H1 (cell line): ENCODE measurements at regions of chr1 and their contacts with region 1.

Region 1: GRCh38 chr1:160768295-160768657 is 27.7 kb upstream of the LY9 start:
- DNase-seq: peak in 1 of 2 experiments; percentile 60
- H3K4me3 ChIP-seq: no peak overlapping the region
- H3K27ac ChIP-seq: no peak overlapping the region
- H3K4me1 ChIP-seq: no peaks in the 10 kb centered on the region
- H3K27me3 ChIP-seq: no peaks in the 10 kb centered on the region
- CTCF ChIP-seq: peak; percentile 82 to 89 (median 85)
- EP300 ChIP-seq: no peak
- POLR2A ChIP-seq: no peak
- RAD21 ChIP-seq: peak; percentile 78 to 81

Region 2: DNA sequence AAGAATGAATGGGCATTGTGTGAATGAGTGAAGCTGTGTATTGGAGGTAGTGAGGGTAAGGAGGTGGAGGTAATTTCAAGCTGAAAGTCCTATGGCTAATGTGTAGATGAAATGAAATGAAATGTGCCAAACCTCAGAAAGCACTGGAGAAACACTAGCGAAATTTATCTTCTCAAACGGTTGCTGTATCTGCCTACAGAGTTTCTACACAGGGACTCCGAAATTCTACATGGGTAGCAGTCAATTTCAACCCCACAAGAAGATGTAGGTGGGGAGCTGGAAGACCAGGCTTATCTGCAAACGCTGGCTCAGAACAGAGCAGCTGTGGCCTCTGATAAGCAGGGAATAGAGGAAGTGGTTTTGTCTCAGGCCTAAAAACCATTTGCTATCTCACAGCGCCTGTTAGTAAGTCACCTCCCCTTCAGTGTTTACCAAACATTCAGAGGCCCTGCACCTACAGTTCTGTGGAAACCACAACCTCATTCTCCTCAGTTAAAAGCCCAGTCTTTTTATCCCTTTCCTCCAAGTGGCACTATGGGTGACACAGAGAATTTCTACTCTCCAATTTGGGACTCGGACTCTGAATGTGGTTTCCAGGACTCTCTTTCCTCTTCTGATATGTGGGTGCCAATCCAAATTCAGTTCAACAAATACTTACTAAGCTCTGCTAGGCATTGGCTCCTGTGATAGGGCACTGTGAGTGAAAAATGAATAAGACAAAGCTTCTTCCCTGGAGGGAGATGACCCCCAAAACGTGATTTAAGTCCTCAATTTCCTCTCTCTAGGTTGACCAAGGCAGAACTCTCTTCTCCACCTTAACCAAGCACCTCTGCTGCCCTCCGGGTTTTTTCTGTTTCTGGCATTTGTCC is 228.1 kb before region 1 on chr1:
- CTCF ChIA-PET with region 1: no interaction called
- POLR2A ChIA-PET with region 1: no interaction called
- DNase-seq: no peak
- H3K4me3 ChIP-seq: no peak overlapping the region
- H3K27ac ChIP-seq: no peak overlapping the region
- H3K4me1 ChIP-seq: no peaks in the 10 kb centered on the region
- H3K27me3 ChIP-seq: no peaks in the 10 kb centered on the region
- CTCF ChIP-seq: no peak
- EP300 ChIP-seq: no peak
- POLR2A ChIP-seq: no peak
- RAD21 ChIP-seq: no peak

Region 3: DNA sequence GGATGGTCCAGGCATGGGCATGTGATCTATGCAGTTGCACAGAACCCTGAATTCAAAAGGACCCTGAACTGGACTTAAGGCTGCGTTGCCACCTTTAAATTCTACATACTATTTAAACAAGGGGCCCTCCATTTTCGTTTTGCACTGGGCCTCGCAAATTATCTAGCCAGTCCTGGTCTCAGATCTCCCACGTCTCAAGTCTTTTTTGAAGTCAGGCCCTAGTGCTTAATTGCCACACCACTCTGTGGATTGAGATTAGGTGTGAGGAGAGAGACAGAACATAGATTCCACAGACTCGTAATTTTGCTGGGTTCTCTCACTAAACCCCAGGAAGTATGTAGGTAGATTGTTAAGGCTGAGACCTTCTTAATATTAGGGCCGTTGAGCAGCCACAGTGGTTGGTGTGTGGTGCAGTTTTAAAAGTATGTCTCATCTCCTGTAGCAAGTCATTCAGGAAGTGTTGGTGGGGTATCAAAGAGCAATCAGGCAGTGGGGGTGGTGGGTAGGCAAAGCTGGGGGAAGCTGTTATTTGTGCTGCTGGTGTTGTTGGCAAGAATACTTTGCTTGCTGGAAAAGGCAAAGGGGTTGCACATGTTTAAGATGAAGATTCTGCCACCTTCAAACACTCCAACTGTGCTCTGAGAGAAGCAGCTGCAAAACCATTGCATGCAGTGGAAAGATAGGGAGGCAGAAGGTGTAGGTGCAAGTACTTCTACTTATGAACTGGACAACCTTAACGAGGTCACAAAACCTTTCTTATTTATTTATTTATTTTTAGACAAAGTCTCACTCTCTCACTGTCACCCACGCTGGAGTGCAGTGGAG is 200.2 kb before region 1 on chr1:
- CTCF ChIA-PET with region 1: no interaction called
- POLR2A ChIA-PET with region 1: no interaction called
- DNase-seq: no peak
- H3K4me3 ChIP-seq: no peak overlapping the region
- H3K27ac ChIP-seq: no peak overlapping the region
- H3K4me1 ChIP-seq: no peaks in the 10 kb centered on the region
- H3K27me3 ChIP-seq: no peaks in the 10 kb centered on the region
- CTCF ChIP-seq: no peak
- EP300 ChIP-seq: no peak
- POLR2A ChIP-seq: no peak
- RAD21 ChIP-seq: no peak

Region 4: GRCh38 chr1:160618763-160619274 is 149.5 kb before region 1 on chr1:
- CTCF ChIA-PET with region 1: no interaction called
- POLR2A ChIA-PET with region 1: no interaction called
- DNase-seq: no peak
- H3K4me3 ChIP-seq: no peak overlapping the region
- H3K27ac ChIP-seq: no peak overlapping the region
- H3K4me1 ChIP-seq: no peaks in the 10 kb centered on the region; a peak in 1 of 7 replicates
- H3K27me3 ChIP-seq: no peaks in the 10 kb centered on the region
- CTCF ChIP-seq: peak in 2 of 3 experiments; percentile 39 to 69; a peak in 3 of 4 replicates
- EP300 ChIP-seq: no peak
- POLR2A ChIP-seq: no peak
- RAD21 ChIP-seq: peak in 1 of 2 experiments; percentile 40; a peak in 1 of 4 replicates

Region 5: GRCh38 chr1:160675641-160676410 is 92.5 kb before region 1 on chr1:
- CTCF ChIA-PET with region 1: interaction called, 42 read pairs
- POLR2A ChIA-PET with region 1: no interaction called
- DNase-seq: peak; percentile 43 to 71
- H3K4me3 ChIP-seq: no peak overlapping the region
- H3K27ac ChIP-seq: no peak overlapping the region
- H3K4me1 ChIP-seq: peaks cover 16 to 27% (median 16%) of the 10 kb centered on the region in 4 experiments
- H3K27me3 ChIP-seq: no peaks in the 10 kb centered on the region
- CTCF ChIP-seq: peak; percentile 74 to 91 (median 88)
- EP300 ChIP-seq: no peak
- POLR2A ChIP-seq: no peak
- RAD21 ChIP-seq: peak; percentile 68 to 81

Region 6: DNA sequence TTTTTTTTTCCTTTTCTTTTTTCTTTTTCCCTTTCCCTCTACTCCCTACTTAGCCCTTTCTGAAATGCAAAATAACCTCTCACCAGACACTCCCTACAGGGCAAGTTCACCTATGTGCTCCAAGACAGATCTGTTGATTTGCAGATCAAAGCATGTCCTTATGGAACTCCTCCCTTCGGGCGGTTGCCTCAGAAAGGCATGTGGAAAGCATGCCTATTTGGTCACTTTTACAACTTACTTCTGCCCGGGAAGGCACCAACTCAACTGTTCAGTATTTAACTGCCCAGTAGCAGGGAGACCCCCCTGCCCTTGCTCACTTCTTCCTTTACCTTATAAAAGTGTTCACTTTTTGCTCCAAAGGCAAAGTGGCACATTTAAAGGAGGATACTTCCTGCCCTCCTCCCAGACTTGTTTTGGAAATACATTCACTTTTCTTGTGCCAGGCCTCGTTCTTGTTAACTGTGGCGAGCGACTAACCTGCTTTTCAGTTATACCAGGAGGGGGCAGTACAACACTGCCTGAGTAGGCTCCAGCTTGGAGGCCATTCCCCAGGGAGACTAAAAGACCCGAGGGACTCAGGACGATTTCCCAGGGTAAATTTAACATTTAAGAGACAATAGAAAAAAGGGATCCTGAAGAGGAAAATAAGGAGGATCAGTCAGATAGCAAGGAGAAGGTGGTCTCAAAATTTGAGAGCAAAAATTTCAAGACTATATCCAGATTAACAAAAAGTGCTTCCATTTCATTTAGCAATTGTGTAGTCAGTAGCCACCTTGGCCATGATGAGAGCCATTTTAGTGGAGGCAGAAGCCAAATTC is 41.6 kb before region 1 on chr1:
- CTCF ChIA-PET with region 1: interaction called, 19 read pairs
- POLR2A ChIA-PET with region 1: no interaction called
- DNase-seq: peak; percentile 62 to 68
- H3K4me3 ChIP-seq: no peak overlapping the region
- H3K27ac ChIP-seq: peak overlapping the region; percentile 12; the same call in 1 of the 2 replicates
- H3K4me1 ChIP-seq: peaks cover 0 to 5% (median 2%) of the 10 kb centered on the region in 4 experiments; a peak in 3 of 7 replicates
- H3K27me3 ChIP-seq: no peaks in the 10 kb centered on the region
- CTCF ChIP-seq: peak; percentile 59 to 92 (median 81)
- EP300 ChIP-seq: no peak
- POLR2A ChIP-seq: no peak
- RAD21 ChIP-seq: peak; percentile 95 to 96

Region 7: GRCh38 chr1:160741612-160742348 is 26.5 kb before region 1 on chr1:
- CTCF ChIA-PET with region 1: interaction called, 63 read pairs
- POLR2A ChIA-PET with region 1: no interaction called
- DNase-seq: no peak
- H3K4me3 ChIP-seq: no peak overlapping the region
- H3K27ac ChIP-seq: no peak overlapping the region
- H3K4me1 ChIP-seq: peaks cover 0 to 3% (median 0%) of the 10 kb centered on the region in 4 experiments; a peak in 1 of 7 replicates
- H3K27me3 ChIP-seq: no peaks in the 10 kb centered on the region
- CTCF ChIP-seq: peak; percentile 23 to 44 (median 38); a peak in 3 of 4 replicates
- EP300 ChIP-seq: no peak
- POLR2A ChIP-seq: no peak
- RAD21 ChIP-seq: peak in 1 of 2 experiments; percentile 16; a peak in 1 of 4 replicates

Region 8: GRCh38 chr1:160748181-160748877 is 19.9 kb before region 1 on chr1:
- CTCF ChIA-PET with region 1: interaction called, 63 read pairs
- POLR2A ChIA-PET with region 1: interaction called, 3 read pairs
- DNase-seq: no peak
- H3K4me3 ChIP-seq: no peak overlapping the region
- H3K27ac ChIP-seq: no peak overlapping the region
- H3K4me1 ChIP-seq: peaks cover 0 to 5% (median 0%) of the 10 kb centered on the region in 4 experiments; a peak in 2 of 7 replicates
- H3K27me3 ChIP-seq: no peaks in the 10 kb centered on the region
- CTCF ChIP-seq: peak in 2 of 3 experiments; percentile 34 to 50; a peak in 2 of 4 replicates
- EP300 ChIP-seq: no peak
- POLR2A ChIP-seq: no peak
- RAD21 ChIP-seq: peak; percentile 29 to 36; a peak in 3 of 4 replicates

Region 9: DNA sequence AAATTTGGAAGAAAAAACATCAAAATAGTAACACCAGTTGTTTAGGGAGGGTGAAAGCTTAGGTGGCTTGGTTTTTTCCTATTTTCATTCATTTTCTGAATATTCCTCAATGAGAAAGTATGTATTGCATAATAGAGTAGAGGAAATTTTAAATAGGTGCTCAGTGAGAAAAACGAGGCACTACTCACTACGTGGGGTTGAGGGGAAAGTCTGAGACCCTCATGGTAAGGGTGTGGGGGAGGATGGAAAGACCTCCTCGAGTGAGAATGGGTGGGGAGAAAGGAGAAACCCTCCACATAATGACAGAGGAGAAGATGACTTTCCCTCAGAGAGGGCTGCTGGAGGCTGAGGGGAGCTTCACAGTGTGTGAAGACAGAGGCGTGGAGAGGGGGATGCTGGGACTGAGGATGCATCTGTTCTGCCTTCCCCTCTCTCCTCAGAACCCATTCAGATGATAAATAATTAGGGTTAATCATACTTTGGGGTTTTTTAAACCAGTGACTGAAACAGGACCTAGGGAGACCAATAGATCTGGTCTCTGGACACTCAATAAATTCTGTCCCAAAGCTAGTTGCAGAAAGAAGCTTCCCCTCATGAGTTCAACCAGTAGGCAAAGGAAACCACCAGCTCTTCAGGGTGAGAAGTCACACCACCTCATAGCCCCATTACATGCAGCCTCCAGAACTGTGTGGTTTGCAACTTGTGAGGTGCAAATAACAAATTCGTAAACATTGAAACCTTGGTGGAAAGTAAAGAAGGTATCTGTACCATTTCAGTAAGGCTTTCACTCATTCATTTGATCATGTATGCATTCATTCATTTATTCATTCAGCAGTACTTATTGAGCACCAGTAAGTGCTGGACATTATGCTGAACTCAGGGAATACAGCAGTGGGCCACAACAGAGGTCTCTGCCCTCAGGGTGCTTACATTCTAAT is 12.1 kb before region 1 on chr1:
- CTCF ChIA-PET with region 1: interaction called, 22 read pairs
- POLR2A ChIA-PET with region 1: no interaction called
- DNase-seq: no peak
- H3K4me3 ChIP-seq: no peak overlapping the region
- H3K27ac ChIP-seq: no peak overlapping the region
- H3K4me1 ChIP-seq: no peaks in the 10 kb centered on the region
- H3K27me3 ChIP-seq: no peaks in the 10 kb centered on the region
- CTCF ChIP-seq: no peak
- EP300 ChIP-seq: no peak
- POLR2A ChIP-seq: no peak
- RAD21 ChIP-seq: no peak

Region 10: GRCh38 chr1:160830321-160831153 is 62.3 kb after region 1 on chr1:
- CTCF ChIA-PET with region 1: interaction called, 11 read pairs
- POLR2A ChIA-PET with region 1: no interaction called
- DNase-seq: peak in 1 of 2 experiments; percentile 91
- H3K4me3 ChIP-seq: no peak overlapping the region
- H3K27ac ChIP-seq: no peak overlapping the region
- H3K4me1 ChIP-seq: no peaks in the 10 kb centered on the region
- H3K27me3 ChIP-seq: no peaks in the 10 kb centered on the region
- CTCF ChIP-seq: peak; percentile 82 to 93 (median 89)
- EP300 ChIP-seq: no peak
- POLR2A ChIP-seq: no peak
- RAD21 ChIP-seq: peak; percentile 75 to 80

Region 11: DNA sequence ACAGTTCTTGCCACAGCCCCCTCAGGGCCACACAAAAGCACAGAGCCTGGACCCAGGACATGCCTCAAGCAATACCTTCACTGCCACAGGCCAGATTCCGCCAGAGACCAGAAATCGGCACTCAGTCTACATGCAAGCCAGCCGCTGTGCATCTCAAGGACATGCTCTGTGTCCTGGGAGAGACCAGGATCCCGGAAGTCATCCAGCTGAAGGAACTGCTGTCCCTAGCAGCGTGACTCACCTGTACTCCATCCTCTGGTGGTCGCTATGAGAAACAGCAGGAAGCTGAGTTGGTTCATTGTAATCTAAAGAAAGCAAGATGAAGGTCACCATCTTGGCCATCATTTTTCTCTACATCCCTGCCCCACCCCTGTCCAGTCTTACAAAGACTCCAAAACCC is 116.3 kb after region 1 on chr1:
- CTCF ChIA-PET with region 1: no interaction called
- POLR2A ChIA-PET with region 1: no interaction called
- DNase-seq: no peak
- H3K4me3 ChIP-seq: no peak overlapping the region
- H3K27ac ChIP-seq: no peak overlapping the region
- H3K4me1 ChIP-seq: no peaks in the 10 kb centered on the region
- H3K27me3 ChIP-seq: no peaks in the 10 kb centered on the region
- CTCF ChIP-seq: peak; percentile 39 to 69 (median 42)
- EP300 ChIP-seq: no peak
- POLR2A ChIP-seq: no peak
- RAD21 ChIP-seq: peak; percentile 43 to 46; a peak in 3 of 4 replicates